Activated CD4-positive, alpha-beta T cell treated with anti-CD3 and anti-CD28 coated beads, Interleukin-2, amount 10 ng/mL, durations not matched to agents 7 days and 5 days (primary cell): ENCODE measurements at regions of chr19 and their contacts with region 1.

Region 1: DNA sequence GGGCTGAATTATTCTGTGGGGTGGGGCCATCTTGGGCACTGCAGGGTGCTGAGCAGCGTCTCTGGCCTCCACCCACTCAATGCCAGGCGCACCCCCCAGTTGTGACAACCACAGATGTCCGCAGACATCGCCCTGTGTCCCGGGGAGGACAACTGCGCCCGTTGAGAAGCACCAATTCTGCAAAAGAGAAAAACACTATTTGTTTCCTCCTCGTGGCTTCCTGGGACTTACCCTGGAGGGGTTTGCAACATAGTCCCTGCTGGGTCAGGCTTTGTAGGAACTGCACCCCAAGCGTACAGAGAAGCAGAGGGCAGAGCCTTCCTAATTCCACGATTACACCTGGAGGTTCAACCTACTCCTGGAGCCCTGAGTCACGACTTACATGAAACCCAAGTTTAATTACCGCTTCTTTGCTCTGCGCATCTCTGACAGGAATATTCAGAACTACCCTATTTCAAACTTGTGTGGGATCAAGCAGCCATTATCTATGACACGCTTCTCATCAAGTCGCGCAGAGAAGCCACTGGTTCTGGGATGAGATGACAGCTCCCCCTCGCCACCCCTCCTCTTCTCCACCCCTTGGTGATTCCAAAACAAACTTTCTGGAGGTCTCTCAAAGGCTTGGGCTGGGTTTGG is 11.1 kb upstream of the SLC39A3 start:
- DNase-seq: no peak
- H3K4me3 Mint-ChIP-seq: no peak overlapping the region
- H3K27ac Mint-ChIP-seq: no peak overlapping the region
- H3K4me1 Mint-ChIP-seq: no peaks in the 10 kb centered on the region
- H3K27me3 Mint-ChIP-seq: no peaks in the 10 kb centered on the region

Region 2: DNA sequence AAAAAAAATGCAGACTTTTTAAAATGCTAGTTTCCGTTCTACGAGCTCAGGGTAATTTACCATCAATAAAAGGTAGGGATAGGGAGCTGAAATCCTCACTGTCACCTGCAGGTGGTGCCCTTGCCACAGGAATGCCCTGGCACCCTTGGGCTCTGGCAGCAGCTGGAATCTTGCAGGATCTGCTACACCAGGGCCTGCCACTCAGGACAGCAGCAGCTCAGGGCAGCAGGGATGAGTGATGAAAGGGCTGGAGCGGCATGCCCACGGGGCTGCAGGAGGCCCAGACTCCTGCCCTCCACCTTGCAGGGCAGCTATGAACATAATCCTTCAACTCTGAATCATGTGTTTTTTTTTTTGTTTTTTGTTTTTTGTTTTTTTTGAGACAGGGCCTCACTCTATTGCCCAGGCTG is 102.4 kb before region 1 on chr19:
- CTCF ChIA-PET with region 1: interaction called, 19 read pairs
- POLR2A ChIA-PET with region 1: no interaction called
- DNase-seq: peak; percentile 78
- H3K4me3 Mint-ChIP-seq: no peak overlapping the region
- H3K27ac Mint-ChIP-seq: no peak overlapping the region
- H3K4me1 Mint-ChIP-seq: no peaks in the 10 kb centered on the region
- H3K27me3 Mint-ChIP-seq: no peaks in the 10 kb centered on the region

Region 3: GRCh38 chr19:2768365-2769132 is 17.6 kb after region 1 on chr19:
- CTCF ChIA-PET with region 1: no interaction called
- POLR2A ChIA-PET with region 1: no interaction called
- DNase-seq: no peak
- H3K4me3 Mint-ChIP-seq: no peak overlapping the region
- H3K27ac Mint-ChIP-seq: no peak overlapping the region
- H3K4me1 Mint-ChIP-seq: no peaks in the 10 kb centered on the region
- H3K27me3 Mint-ChIP-seq: no peaks in the 10 kb centered on the region